ENCODE measurements at regions of chr1 and their contacts with region 1.

Region 1: GRCh38 chr1:24642481-24643361 is at the start of gene SRRM1:
- DNase-seq: peak; percentile 99
- H3K4me3 Mint-ChIP-seq: peak within 1 kb of the TSS; percentile 91
- H3K27ac Mint-ChIP-seq: peak within 1 kb of the TSS; percentile 98
- H3K4me1 Mint-ChIP-seq: peaks cover 38% of the 10 kb centered on the region
- H3K27me3 Mint-ChIP-seq: no peaks in the 10 kb centered on the region
- total RNA-seq, gene SRRM1: 258 and 261 TPM in 2 replicates

Region 2: DNA sequence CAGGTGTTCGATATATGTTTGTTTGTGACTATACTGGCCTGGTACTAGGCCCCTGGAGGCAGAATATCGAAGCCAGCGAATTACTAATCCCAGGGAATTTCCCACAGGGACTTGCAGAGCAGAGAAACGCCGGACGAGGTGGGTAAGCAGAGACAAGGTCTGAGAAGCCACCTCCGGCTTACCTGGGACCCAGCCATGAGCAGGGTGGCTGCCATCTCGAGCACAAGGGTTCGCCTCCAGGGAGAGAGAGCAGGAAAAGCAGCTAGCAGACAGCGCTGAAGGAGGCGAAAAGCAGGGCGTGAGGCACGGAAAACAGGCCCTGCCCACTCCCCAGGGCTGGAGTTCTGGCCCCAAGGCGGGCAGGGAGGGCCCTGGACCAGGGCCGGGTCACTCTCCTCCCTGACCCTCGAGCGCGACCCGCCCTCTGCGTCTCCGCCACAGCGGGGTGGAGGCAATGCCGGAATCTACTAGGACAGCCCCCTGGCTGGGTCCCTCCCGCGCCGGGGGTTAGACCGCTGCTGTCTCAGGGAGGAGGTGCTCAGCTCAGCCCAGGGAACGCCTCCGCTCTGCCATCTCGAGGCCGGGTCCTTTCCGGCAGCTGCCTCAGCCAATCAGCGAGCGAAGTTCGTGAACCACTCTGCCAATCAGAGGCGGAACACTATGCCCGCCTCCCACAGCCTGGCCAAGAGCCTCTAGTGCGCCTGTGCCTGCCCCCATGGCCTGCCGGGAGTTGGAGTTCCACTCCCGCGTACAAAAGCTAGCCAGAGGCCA is 1274.7 kb before region 1 on chr1:
- intact Hi-C with region 1: loop called (anchors 5 kb)
- DNase-seq: peak; percentile 99
- H3K4me3 Mint-ChIP-seq: peak overlapping the region; percentile 94
- H3K27ac Mint-ChIP-seq: peak overlapping the region; percentile 99
- H3K4me1 Mint-ChIP-seq: peaks cover 33% of the 10 kb centered on the region
- H3K27me3 Mint-ChIP-seq: no peaks in the 10 kb centered on the region

Region 3: GRCh38 chr1:24415334-24415909 is 227.3 kb before region 1 on chr1 and contains the start of gene NIPAL3:
- intact Hi-C with region 1: loop called (anchors 5 kb)
- DNase-seq: peak; percentile 99
- H3K4me3 Mint-ChIP-seq: peak within 1 kb of the TSS; percentile 88
- H3K27ac Mint-ChIP-seq: peak within 1 kb of the TSS; percentile 90
- H3K4me1 Mint-ChIP-seq: peaks cover 53% of the 10 kb centered on the region
- H3K27me3 Mint-ChIP-seq: no peaks in the 10 kb centered on the region
- total RNA-seq, gene NIPAL3: 25.1 and 26.3 TPM in 2 replicates

Region 4: GRCh38 chr1:24506691-24507381 is 135.9 kb before region 1 on chr1:
- intact Hi-C with region 1: no loop called
- DNase-seq: peak; percentile 72
- H3K4me3 Mint-ChIP-seq: peak overlapping the region; percentile 74
- H3K27ac Mint-ChIP-seq: peak overlapping the region; percentile 88
- H3K4me1 Mint-ChIP-seq: peaks cover 69% of the 10 kb centered on the region
- H3K27me3 Mint-ChIP-seq: no peaks in the 10 kb centered on the region

Region 5: GRCh38 chr1:24541711-24542346 is 100.9 kb before region 1 on chr1:
- intact Hi-C with region 1: loop called (anchors 2 kb)
- DNase-seq: peak; percentile 76
- H3K4me3 Mint-ChIP-seq: peak overlapping the region; percentile 34
- H3K27ac Mint-ChIP-seq: peak overlapping the region; percentile 28
- H3K4me1 Mint-ChIP-seq: peaks cover 43% of the 10 kb centered on the region
- H3K27me3 Mint-ChIP-seq: no peaks in the 10 kb centered on the region

Region 6: DNA sequence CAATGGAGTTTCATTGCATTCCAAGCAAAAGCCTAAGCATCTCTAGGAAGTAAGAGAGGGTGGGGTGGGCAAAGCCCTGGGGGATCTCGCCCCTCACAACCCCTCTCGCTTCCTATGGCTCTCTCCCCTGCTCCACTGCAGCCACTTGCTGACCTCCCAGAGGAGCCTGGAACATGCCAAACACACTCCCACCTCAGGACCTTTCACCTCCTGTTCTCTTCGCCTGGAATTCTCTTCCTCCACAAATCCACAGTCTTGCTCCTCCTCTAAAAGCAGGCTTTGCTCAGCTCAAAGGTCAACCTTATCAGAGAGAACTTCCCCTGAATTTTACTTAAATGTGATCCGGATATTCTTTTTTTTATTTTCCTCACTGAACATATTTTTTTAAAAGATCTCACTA is 20.5 kb before region 1 on chr1:
- intact Hi-C with region 1: no loop called
- DNase-seq: no peak
- H3K4me3 Mint-ChIP-seq: no peak overlapping the region
- H3K27ac Mint-ChIP-seq: no peak overlapping the region
- H3K4me1 Mint-ChIP-seq: no peaks in the 10 kb centered on the region
- H3K27me3 Mint-ChIP-seq: peaks cover 32% of the 10 kb centered on the region

Region 7: DNA sequence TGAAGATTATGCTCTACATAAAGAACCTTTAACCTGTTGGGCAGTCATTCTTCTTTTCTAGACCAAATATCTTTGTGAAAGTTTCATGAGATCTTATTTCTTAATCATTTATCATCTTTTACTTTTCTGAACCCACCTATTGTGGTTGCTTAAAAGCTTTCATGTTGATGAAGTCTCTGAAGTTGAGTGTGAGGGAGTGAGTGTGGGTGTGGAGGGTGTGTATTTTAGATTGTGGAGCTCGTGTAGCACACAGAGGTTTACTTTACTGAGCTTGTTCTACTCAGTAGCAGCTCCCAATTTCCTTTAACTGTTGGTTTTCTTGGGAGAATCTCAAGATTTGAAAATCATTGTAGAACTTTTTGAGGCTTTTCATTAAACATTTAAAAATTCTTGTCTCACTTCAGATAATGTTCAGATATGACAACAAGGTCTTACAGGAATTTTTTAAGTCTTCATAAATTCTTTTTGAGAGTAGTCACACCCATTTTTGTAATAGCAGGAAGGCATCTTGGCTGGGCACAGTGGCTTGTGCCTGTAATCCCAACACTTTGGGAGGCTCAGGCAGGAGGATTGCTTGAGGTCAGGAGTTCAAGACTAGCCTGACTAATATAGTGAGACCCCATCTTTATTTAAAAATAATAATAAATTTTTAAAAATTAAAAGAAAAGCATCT is 17.4 kb after region 1 on chr1:
- intact Hi-C with region 1: no loop called
- DNase-seq: no peak
- H3K4me3 Mint-ChIP-seq: no peak overlapping the region
- H3K27ac Mint-ChIP-seq: no peak overlapping the region
- H3K4me1 Mint-ChIP-seq: peaks cover 30% of the 10 kb centered on the region
- H3K27me3 Mint-ChIP-seq: no peaks in the 10 kb centered on the region

Region 8: GRCh38 chr1:24754229-24754628 is 111.5 kb after region 1 on chr1:
- intact Hi-C with region 1: no loop called
- DNase-seq: no peak
- H3K4me3 Mint-ChIP-seq: no peak overlapping the region
- H3K27ac Mint-ChIP-seq: no peak overlapping the region
- H3K4me1 Mint-ChIP-seq: peaks cover 5% of the 10 kb centered on the region
- H3K27me3 Mint-ChIP-seq: no peaks in the 10 kb centered on the region

Region 9: DNA sequence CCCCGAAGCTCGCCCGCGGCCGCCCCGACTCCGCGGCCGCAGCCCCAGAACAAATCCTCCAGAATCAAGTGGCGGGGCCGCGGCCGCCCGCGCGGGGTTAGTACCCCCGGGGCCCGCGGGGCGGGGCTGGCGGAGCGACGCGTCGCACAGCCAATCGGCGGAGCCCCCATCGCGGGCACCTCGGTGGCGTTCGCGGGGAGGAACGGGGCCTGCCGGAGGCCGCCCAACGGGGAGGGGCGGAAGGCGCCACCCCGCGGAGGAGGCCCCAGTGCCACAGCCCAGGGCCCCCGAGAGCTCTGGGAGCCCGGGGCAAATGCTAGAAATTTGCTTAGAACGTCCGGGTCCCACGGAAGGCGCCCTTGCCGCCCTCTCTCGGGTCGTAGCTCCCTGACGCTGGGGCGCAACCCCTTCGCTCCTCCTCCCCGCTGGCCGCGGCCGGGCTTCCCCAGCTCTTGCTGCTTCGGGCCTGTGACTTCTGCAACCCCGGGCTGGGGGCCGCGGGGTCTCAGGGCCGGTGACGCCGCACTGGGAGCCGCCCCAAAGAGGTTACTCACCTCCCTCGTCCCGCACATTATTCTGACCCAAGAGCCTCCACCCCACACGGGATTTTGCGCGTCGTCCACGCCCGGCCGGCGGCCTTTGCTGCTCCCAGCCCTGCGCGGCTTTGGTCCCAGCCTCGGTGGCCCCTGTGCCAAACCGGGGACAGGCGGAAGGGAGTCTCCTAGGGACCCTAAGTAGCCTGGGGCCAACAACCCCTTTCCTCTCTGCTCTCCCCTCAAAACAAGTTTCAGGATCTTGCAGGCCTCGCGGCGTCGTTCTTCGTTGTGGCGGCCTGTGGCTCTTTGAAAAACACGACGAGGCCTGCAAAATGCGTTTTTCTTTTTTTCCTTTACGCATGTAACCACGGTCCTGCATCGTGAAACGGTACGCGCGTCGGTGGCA is 287.8 kb after region 1 on chr1 and contains the start of gene RUNX3:
- intact Hi-C with region 1: loop called (anchors 5 kb)
- DNase-seq: peak; percentile 97
- H3K4me3 Mint-ChIP-seq: peak within 1 kb of the TSS; percentile 96
- H3K27ac Mint-ChIP-seq: peak within 1 kb of the TSS; percentile 92
- H3K4me1 Mint-ChIP-seq: peaks cover 69% of the 10 kb centered on the region
- H3K27me3 Mint-ChIP-seq: no peaks in the 10 kb centered on the region
- total RNA-seq, gene RUNX3: 110 and 112 TPM in 2 replicates